ENCODE measurements at regions of chr7 and their contacts with region 1.

Region 1: GRCh38 chr7:102279537-102280400 is 6.9 kb upstream of the SH2B2 start:
- DNase-seq: peak; percentile 32
- H3K4me3 ChIP-seq: no peak overlapping the region
- CTCF ChIP-seq: peak; percentile 89

Region 2: GRCh38 chr7:102093287-102094001 is 186.3 kb before region 1 on chr7:
- in situ Hi-C with region 1: no loop called
- DNase-seq: no peak
- H3K4me3 ChIP-seq: no peak overlapping the region
- CTCF ChIP-seq: no peak

Region 3: GRCh38 chr7:102412548-102412947 is 132.8 kb after region 1 on chr7:
- in situ Hi-C with region 1: loop called (anchors 10 kb)
- DNase-seq: no peak
- H3K4me3 ChIP-seq: no peak overlapping the region
- CTCF ChIP-seq: peak; percentile 61